ENCODE measurements at regions of chr17 and their contacts with region 1.

Region 1: DNA sequence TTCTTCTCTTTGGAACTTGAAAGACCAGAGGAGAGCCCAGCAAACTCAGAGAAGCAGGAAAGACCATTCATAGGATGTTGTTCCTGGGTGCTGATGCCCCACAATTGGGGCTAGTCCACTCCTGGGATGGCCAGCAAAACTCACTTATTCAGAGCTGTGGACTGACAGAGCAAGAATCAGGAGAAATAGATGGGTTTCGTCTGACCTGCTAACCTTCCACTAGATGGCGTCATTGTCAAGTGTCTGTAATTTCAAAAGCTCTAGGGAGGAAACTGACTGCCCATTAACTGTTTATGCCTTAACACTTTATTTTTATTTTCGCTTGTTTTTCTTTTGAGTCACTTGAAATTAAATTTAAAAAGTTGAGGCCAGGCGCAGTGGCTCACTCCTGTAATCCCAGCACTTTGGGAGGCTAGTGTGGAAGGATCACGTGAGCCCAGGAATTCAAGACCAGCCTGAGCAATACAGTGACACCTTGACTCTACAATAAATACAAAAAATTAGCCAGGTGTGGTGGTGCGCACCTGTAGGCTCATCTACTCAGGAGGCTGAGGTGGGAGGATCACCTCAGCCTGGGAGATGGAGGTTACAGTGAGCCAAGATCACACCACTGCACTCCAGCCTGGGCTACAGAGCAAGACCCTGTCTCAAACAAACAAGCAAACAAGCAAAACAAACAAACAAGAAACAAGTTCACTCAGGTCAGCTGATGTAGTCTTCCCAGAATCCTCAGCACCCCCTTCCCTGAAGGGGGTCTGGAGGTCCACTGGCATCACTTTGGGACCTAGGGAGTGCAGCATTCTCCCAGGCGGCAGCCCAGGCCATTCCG is 28.6 kb upstream of the MILR1 start:
- DNase-seq: peak; percentile 84
- ATAC-seq: peak; percentile 91
- H3K4me3 ChIP-seq: no peak overlapping the region
- H3K27ac ChIP-seq: no peak overlapping the region
- H3K4me1 ChIP-seq: peaks cover 2% of the 10 kb centered on the region; the same call in 1 of the 2 replicates
- H3K27me3 ChIP-seq: peaks cover 12% of the 10 kb centered on the region
- CTCF ChIP-seq: peak; percentile 84
- POLR2A ChIP-seq: no peak
- RAD21 ChIP-seq: peak; percentile 85

Region 2: DNA sequence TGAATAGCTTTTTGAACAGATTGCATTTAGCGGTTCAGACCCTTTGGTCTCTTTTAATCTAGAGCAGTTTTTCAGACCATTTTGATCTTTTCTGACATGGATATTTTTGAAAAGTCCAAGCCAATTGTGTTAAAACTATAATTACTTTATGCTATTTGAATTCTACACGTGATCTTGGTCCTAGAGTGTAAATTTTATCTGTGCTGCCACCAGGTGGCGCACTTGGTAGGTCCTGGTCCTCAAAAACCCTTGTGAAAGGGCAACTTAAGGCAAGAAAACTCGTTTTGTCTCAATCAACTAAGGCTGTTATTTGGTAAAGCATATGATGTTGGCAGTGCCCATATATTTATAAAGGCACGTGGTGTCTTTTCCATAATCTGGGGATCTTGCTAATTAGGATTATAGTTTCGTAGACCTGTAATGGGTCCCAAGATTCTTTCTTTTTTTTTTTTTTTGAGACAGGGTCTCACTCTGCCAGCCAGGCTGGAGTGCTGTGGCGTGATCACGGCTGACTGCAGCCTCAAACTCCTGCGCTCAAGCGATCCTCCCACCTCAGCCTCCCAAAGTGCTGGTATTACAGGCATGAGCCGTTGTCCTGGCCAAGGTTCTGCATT is 113.4 kb before region 1 on chr17:
- CTCF ChIA-PET with region 1: interaction called, 8 read pairs
- POLR2A ChIA-PET with region 1: no interaction called
- dilution Hi-C with region 1: no loop called
- in situ Hi-C with region 1: no loop called
- intact Hi-C with region 1: loop called (anchors 1 kb)
- DNase-seq: peak; percentile 67
- ATAC-seq: peak; percentile 65
- H3K4me3 ChIP-seq: no peak overlapping the region
- H3K27ac ChIP-seq: no peak overlapping the region
- H3K4me1 ChIP-seq: no peaks in the 10 kb centered on the region
- H3K27me3 ChIP-seq: peaks cover 41% of the 10 kb centered on the region
- CTCF ChIP-seq: peak; percentile 82
- POLR2A ChIP-seq: no peak
- RAD21 ChIP-seq: peak; percentile 50

Region 3: GRCh38 chr17:64320613-64321553 is 99.5 kb before region 1 on chr17:
- CTCF ChIA-PET with region 1: interaction called, 15 read pairs
- POLR2A ChIA-PET with region 1: no interaction called
- dilution Hi-C with region 1: no loop called
- in situ Hi-C with region 1: loop called (anchors 5 kb)
- intact Hi-C with region 1: loop called (anchors 1 kb)
- DNase-seq: peak; percentile 65
- ATAC-seq: peak; percentile 83; the same call in 1 of the 2 replicates
- H3K4me3 ChIP-seq: no peak overlapping the region
- H3K27ac ChIP-seq: no peak overlapping the region
- H3K4me1 ChIP-seq: no peaks in the 10 kb centered on the region
- H3K27me3 ChIP-seq: peaks cover 44% of the 10 kb centered on the region
- CTCF ChIP-seq: peak; percentile 73
- POLR2A ChIP-seq: no peak
- RAD21 ChIP-seq: peak; percentile 78

Region 4: GRCh38 chr17:64491034-64491859 is 70.9 kb after region 1 on chr17:
- CTCF ChIA-PET with region 1: interaction called, 35 read pairs
- POLR2A ChIA-PET with region 1: interaction called, 3 read pairs
- dilution Hi-C with region 1: no loop called
- in situ Hi-C with region 1: loop called (anchors 5 kb)
- intact Hi-C with region 1: loop called (anchors 1 kb)
- DNase-seq: peak; percentile 42
- ATAC-seq: peak; percentile 66
- H3K4me3 ChIP-seq: no peak overlapping the region
- H3K27ac ChIP-seq: no peak overlapping the region
- H3K4me1 ChIP-seq: no peaks in the 10 kb centered on the region
- H3K27me3 ChIP-seq: no peaks in the 10 kb centered on the region
- CTCF ChIP-seq: peak; percentile 63
- POLR2A ChIP-seq: no peak
- RAD21 ChIP-seq: peak; percentile 70

Region 5: GRCh38 chr17:64520359-64520758 is 100.0 kb after region 1 on chr17:
- CTCF ChIA-PET with region 1: no interaction called
- POLR2A ChIA-PET with region 1: no interaction called
- dilution Hi-C with region 1: no loop called
- in situ Hi-C with region 1: no loop called
- intact Hi-C with region 1: no loop called
- DNase-seq: no peak
- ATAC-seq: no peak
- H3K4me3 ChIP-seq: no peak overlapping the region
- H3K27ac ChIP-seq: no peak overlapping the region
- H3K4me1 ChIP-seq: no peaks in the 10 kb centered on the region
- H3K27me3 ChIP-seq: no peaks in the 10 kb centered on the region
- CTCF ChIP-seq: no peak
- POLR2A ChIP-seq: no peak; the same call in 1 of the 2 replicates
- RAD21 ChIP-seq: no peak

Region 6: DNA sequence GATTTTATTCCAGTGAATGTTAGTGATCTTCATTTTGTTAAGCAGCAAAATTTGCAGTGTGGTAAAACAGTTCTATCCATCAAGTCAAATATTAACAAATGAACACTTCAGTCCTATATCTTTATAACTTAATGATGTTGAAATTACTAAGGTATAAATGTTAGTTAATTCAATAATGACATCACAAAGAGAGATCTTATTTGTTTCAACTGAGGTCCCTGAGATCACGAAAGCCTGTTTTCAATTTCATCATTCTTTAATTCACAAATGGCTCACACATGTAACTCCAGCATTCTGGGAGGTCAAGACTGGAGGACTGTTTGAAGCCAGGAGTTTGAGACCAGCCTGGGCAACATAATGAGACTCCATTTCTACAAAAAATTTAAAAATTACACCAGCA is 227.9 kb after region 1 on chr17:
- CTCF ChIA-PET with region 1: no interaction called
- POLR2A ChIA-PET with region 1: no interaction called
- dilution Hi-C with region 1: no loop called
- in situ Hi-C with region 1: no loop called
- intact Hi-C with region 1: loop called (anchors 2 kb)
- DNase-seq: no peak
- ATAC-seq: no peak
- H3K4me3 ChIP-seq: no peak overlapping the region
- H3K27ac ChIP-seq: peak overlapping the region; percentile 7; the same call in 1 of the 2 replicates
- H3K4me1 ChIP-seq: peaks cover 3% of the 10 kb centered on the region
- H3K27me3 ChIP-seq: no peaks in the 10 kb centered on the region
- CTCF ChIP-seq: no peak
- POLR2A ChIP-seq: no peak
- RAD21 ChIP-seq: no peak

Measured in IMR-90 (cell line).